Activated CD8-positive, alpha-beta T cell treated with anti-CD3 and anti-CD28 coated beads for 36 hours (primary cell): ENCODE measurements at regions of chr11 and their contacts with region 1.

Region 1: DNA sequence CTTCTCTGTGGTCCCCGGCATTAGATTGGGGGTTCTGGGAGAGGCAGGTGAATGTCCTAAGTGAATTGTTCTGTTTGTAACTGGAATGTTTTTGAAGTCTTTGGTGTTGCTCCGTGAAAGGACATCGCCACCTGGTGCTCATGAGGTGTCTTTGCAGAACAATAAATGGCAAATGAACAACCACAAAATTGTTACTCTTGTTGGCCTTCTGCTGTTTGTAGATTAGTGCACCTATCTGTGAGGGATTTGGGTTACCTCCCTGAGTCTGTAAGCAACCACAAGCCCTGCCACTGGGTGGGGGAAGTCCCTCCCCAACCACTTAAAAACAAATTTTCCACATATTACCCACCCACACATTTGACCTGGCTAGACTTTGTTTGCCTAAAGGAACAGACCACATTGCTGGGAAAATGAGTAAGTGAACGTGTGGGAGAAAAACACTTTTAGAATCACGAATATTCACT is 4.7 kb downstream of the MPEG1 start:
- DNase-seq: peak; percentile 50
- ATAC-seq: peak; percentile 84
- H3K4me3 Mint-ChIP-seq: no peak overlapping the region
- H3K27ac Mint-ChIP-seq: peak overlapping the region; percentile 34
- H3K4me1 Mint-ChIP-seq: peaks cover 26% of the 10 kb centered on the region
- H3K27me3 Mint-ChIP-seq: peaks cover 11% of the 10 kb centered on the region
- CTCF ChIP-seq: peak; percentile 71

Region 2: DNA sequence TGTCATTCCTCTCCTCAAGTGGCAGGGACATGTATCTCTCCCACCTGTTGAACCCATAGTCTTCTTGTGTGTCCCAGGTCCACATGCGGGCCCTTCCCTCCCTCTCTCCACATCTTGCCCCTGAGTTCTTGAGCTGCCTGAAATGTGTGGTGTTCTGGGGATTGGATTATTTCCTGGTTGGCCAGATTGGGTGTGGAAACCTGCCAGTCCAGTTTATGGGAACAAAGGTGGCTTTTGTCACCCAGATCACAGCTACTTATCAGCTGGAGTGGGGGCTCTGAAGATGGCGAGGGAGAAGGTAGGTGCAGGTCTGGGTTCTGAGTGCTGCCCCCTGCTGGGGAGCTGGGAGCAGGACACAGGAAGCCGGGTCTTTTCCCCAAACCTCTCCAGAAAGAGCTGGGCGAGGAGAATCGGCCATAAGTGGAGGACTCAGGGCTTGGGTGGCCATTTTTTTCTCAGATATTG is 21.9 kb before region 1 on chr11:
- CTCF ChIA-PET with region 1: interaction called, 59 read pairs
- POLR2A ChIA-PET with region 1: no interaction called
- intact Hi-C with region 1: no loop called
- DNase-seq: peak; percentile 65
- ATAC-seq: peak; percentile 89
- H3K4me3 Mint-ChIP-seq: no peak overlapping the region
- H3K27ac Mint-ChIP-seq: no peak overlapping the region
- H3K4me1 Mint-ChIP-seq: peaks cover 2% of the 10 kb centered on the region
- H3K27me3 Mint-ChIP-seq: peaks cover 2% of the 10 kb centered on the region
- CTCF ChIP-seq: peak; percentile 78

Region 3: GRCh38 chr11:59197991-59198390 is 10.0 kb before region 1 on chr11:
- CTCF ChIA-PET with region 1: interaction called, 10 read pairs
- POLR2A ChIA-PET with region 1: no interaction called
- intact Hi-C with region 1: no loop called
- DNase-seq: no peak
- ATAC-seq: no peak
- H3K4me3 Mint-ChIP-seq: no peak overlapping the region
- H3K27ac Mint-ChIP-seq: no peak overlapping the region
- H3K4me1 Mint-ChIP-seq: peaks cover 16% of the 10 kb centered on the region
- H3K27me3 Mint-ChIP-seq: peaks cover 3% of the 10 kb centered on the region
- CTCF ChIP-seq: no peak